Right ventricle myocardium inferior (tissue), 1 donor: ENCODE measurements at regions of chr2 and their contacts with region 1.

Region 1: DNA sequence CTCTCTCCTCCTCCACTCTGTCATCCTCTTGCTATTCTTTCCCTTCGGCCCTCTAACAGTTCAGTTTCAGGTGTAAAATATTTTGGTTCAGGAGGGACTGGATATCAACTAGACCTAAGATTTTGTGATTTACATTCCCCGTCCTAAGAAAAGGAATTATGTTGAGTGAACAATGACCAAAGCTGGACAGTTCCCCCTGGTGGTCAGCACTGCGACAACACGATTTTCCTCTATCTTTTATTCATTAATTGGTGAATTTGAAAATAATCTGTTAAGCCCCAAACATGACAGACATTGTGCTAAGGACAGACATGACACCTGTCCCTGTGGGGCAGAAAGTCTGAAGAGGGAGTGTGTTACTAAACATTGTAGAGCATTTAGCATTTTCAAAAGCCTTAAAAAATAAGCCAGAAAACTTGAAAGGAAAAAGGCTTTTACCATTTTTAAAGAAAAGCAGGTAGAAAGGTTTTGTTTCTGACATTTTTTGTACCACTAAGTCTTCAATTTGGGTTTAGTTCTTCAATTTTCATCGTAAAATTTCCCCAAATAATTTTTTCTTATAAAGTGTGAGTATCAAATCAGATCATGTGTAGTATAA is 28.4 kb upstream of the GTF2A1L start:
- DNase-seq: no peak
- ATAC-seq: peak; percentile 54

Region 2: DNA sequence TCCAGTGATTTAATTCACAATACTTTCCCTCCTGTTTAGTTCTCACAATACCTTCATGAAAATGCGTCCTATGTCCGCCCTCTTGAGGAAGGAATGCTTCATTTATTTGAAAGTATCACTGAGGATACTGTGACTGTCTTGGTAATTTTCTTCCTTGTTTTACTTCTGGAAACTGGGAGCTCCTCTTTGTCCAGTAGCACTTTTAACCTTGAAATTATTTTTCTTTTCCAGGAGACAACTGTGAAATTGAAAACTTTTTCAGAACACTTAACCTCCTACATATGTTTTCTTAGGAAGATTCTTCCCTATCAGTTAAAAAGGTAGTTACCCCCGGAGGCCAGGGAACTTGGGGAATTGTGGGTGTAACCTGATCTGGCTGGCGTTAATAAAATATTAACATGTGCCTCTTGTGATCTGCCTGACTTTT is 118.2 kb before region 1 on chr2:
- intact Hi-C with region 1: loop called (anchors 1 kb)
- DNase-seq: no peak
- ATAC-seq: peak; percentile 52

Region 3: GRCh38 chr2:48496849-48497248 is 92.4 kb before region 1 on chr2:
- intact Hi-C with region 1: loop called (anchors 5 kb)
- DNase-seq: no peak
- ATAC-seq: no peak

Region 4: GRCh38 chr2:48529676-48530032 is 59.6 kb before region 1 on chr2:
- intact Hi-C with region 1: loop called (anchors 5 kb)
- DNase-seq: no peak
- ATAC-seq: no peak